ENCODE measurements at regions of chr16 and their contacts with region 1.

Region 1: DNA sequence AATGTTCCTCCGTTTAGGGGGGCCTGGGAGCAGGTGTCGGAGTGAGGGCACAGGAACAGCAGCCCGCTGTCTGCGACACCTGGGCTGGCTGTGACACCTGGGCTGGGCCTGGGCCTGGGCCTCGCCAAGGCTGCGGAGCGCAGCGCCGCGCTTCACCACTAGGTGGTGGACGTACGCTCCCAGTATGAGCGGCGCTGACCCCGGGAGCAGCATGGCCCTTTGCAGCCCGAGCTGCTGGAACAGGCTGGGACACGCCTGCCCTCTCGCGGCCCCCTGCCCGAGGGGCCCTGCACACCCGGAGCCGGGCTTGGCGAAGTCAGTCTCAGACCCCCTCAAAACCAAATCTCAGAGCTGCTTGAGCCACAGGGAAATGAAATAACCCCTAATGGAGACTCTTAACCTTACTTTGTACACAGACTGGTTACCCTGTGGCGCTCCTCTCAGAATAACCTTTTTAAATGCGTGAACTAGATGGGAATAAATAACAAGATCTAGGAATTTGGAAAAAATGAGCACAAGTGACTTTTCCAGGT is 38.6 kb upstream of the FA2H start:
- DNase-seq: peak; percentile 86 to 87
- H3K4me3 ChIP-seq: no peak overlapping the region
- H3K27ac ChIP-seq: no peak overlapping the region
- H3K4me1 ChIP-seq: peaks cover 0 to 14% of the 10 kb centered on the region in 2 donors
- H3K27me3 ChIP-seq: no peaks in the 10 kb centered on the region
- CTCF ChIP-seq: peak; percentile 89 to 98 (median 94)
- POLR2A ChIP-seq: no peak

Region 2: GRCh38 chr16:74862741-74863244 is 49.6 kb after region 1 on chr16:
- intact Hi-C with region 1: loop called (anchors 5 kb)
- DNase-seq: no peak
- H3K4me3 ChIP-seq: no peak overlapping the region
- H3K27ac ChIP-seq: no peak overlapping the region
- H3K4me1 ChIP-seq: no peaks in the 10 kb centered on the region
- H3K27me3 ChIP-seq: no peaks in the 10 kb centered on the region
- CTCF ChIP-seq: peak; percentile 61 to 99 (median 88)
- POLR2A ChIP-seq: no peak